ENCODE measurements at regions of chr6 and their contacts with region 1.

Region 1: GRCh38 chr6:82693094-82693493 is 329.5 kb downstream of the TPBG start:
- DNase-seq: no peak
- H3K4me3 ChIP-seq: no peak overlapping the region
- H3K27ac ChIP-seq: no peak overlapping the region
- H3K4me1 ChIP-seq: peaks cover 36% of the 10 kb centered on the region
- H3K27me3 ChIP-seq: no peaks in the 10 kb centered on the region
- CTCF ChIP-seq: no peak

Region 2: GRCh38 chr6:82363351-82364086 is 329.6 kb before region 1 on chr6 and contains the start of gene TPBG:
- CTCF ChIA-PET with region 1: no interaction called
- POLR2A ChIA-PET with region 1: no interaction called
- intact Hi-C with region 1: loop called (anchors 1 kb)
- DNase-seq: peak; percentile 86
- H3K4me3 ChIP-seq: peak within 1 kb of the TSS; percentile 83
- H3K27ac ChIP-seq: peak within 1 kb of the TSS; percentile 95
- H3K4me1 ChIP-seq: peaks cover 40% of the 10 kb centered on the region
- H3K27me3 ChIP-seq: no peaks in the 10 kb centered on the region
- CTCF ChIP-seq: peak; percentile 51
- total RNA-seq, gene TPBG: 66.4 and 67.1 TPM in 2 replicates

Region 3: DNA sequence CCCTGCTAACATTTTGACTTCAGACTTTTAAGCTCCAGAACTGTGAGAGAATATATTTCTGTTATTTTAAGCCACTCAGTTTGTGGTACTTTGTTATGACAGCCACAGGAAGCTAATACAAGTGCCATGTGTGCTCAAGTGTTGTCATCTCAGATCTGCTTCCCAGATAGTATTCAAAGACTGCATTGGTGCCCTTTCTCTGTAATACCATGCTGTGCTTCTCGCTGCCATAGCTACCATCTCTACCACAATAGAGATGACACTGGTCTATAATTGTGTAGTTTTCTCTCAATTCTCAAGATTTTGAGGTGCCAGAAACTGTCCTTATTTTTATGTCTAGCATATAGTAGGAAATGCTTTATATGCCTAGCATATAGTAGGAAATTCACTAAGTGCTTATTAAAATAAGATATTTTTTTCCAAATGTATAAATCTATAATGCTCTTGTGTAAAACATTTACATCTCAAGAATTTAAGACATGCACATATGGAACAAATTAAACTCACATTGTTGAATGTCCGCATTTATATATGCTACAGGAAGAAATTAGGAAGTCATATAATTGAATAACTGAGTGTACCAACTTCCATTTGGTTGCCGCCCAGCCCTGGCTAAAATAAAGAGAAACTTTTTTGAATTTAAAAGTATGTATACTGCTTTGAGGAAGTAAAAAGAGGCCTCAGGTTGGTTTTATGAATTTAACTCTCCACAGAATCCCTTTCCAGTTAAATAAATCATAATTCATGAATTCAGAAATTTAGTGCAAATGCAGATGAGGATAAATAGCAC is 251.8 kb before region 1 on chr6:
- CTCF ChIA-PET with region 1: no interaction called
- POLR2A ChIA-PET with region 1: no interaction called
- intact Hi-C with region 1: loop called (anchors 1 kb)
- DNase-seq: peak; percentile 94
- H3K4me3 ChIP-seq: peak overlapping the region; percentile 9
- H3K27ac ChIP-seq: peak overlapping the region; percentile 78
- H3K4me1 ChIP-seq: peaks cover 30% of the 10 kb centered on the region
- H3K27me3 ChIP-seq: no peaks in the 10 kb centered on the region
- CTCF ChIP-seq: no peak

Measured in A673 (cell line).